ENCODE measurements at regions of chr6 and their contacts with region 1.

Region 1: DNA sequence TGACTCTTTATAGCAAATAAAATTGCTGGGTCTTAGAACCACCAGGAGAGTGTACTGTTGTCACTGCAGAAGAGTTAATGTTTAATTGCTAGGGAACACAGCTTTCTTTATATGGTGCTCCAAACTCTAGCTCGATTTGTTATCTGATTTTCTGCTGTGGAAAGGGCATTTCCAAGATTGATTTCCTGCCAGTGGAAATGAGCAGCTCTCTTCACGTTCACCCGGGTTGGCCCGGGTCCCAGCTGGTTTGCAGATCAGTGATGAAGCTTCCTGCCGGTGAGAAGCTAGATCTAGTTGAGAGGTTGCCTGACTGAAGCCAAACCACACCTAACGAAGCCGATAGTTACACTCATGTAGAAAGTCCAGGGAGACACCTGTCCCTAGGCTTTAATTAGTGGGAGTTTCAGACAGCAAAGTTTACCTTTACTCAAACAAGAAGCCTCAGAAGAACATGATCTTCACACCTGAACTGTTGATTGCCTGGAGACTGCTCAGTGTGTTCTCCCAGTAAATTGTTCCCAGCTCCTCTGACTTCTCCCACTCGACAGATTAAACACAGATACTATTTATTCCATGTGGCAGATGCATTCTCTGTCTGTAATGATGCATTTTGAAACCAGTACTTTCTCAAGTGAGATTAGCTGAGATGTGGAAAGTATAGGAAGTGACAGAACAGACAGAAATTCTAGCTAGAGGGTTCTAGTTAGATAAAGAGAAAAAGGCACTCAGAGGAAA is 27.8 kb downstream of the PAQR8 start:
- DNase-seq: peak; percentile 56
- CTCF ChIP-seq: no peak

Region 2: GRCh38 chr6:51996296-51996947 is 393.4 kb before region 1 on chr6:
- CTCF ChIA-PET with region 1: no interaction called
- POLR2A ChIA-PET with region 1: no interaction called
- DNase-seq: peak; percentile 54
- CTCF ChIP-seq: no peak

Region 3: DNA sequence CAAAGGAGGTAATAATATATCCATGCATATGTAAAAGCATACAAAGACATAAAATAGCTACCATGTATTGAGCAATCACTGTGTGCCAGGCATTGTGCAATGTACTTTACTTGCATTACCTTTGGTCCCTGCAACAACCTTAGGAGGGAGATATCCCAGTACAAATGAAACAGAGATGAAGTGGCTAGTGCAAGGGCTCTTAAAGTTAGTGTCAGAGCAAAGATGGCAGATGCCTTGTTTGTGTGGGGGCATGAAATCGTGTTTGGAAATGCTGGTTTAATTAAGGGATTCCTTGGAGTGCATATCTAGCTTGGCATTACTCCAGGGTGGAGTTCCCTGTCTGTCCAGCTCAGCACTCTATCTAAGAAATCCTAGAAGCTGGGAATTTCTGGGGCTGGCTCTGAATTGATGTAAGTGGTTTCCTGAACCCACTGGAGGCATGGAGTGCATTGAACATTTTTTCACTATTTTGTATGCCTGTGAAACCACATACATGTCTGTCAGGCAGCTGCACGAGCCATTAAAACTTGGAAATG is 18.1 kb before region 1 on chr6:
- CTCF ChIA-PET with region 1: interaction called, 11 read pairs
- POLR2A ChIA-PET with region 1: no interaction called
- DNase-seq: no peak
- CTCF ChIP-seq: no peak

Region 4: GRCh38 chr6:52420671-52421358 is 31.0 kb after region 1 on chr6:
- CTCF ChIA-PET with region 1: no interaction called
- POLR2A ChIA-PET with region 1: no interaction called
- DNase-seq: no peak
- CTCF ChIP-seq: no peak

Measured in GM10248 (cell line).